B cell (primary cell): ENCODE measurements at regions of chr7 and their contacts with region 1.

Region 1: DNA sequence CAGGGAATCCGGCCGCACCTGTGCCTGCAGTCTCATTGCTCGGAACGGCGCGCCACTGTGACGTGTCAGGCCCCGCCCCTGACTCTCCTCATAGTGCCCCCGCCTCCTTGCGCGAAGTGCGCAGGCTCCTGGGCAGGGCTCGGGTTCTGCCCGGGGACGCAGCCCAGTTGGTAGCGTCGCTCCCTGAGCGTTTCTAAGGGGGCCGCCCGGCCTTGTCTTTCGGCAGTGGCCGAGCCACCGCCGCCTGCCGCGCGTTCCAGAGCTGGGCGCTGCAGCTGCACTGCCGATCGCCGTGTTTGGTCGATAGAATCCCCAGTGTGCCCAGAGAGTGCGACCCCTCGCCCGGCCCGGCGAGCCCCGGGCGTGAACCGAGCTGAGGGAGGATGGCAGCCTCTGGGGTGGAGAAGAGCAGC is at the start of gene KLHL7:
- DNase-seq: peak; percentile 96
- ATAC-seq: peak; percentile 96
- H3K4me3 ChIP-seq: peak within 1 kb of the TSS; percentile 86 to 99 (median 94)
- H3K4me3 Mint-ChIP-seq: peak within 1 kb of the TSS; percentile 99
- H3K27ac ChIP-seq: peak within 1 kb of the TSS; percentile 88 to 95
- H3K27ac Mint-ChIP-seq: peak within 1 kb of the TSS; percentile 97
- H3K4me1 ChIP-seq: peaks cover 15 to 16% of the 10 kb centered on the region in 2 donors
- H3K4me1 Mint-ChIP-seq: peaks cover 32% of the 10 kb centered on the region
- H3K27me3 ChIP-seq: no peaks in the 10 kb centered on the region
- H3K27me3 Mint-ChIP-seq: no peaks in the 10 kb centered on the region
- CTCF ChIP-seq: no peak
- total RNA-seq, gene KLHL7: 22.8 and 29.5 TPM in 2 replicates

Region 2: DNA sequence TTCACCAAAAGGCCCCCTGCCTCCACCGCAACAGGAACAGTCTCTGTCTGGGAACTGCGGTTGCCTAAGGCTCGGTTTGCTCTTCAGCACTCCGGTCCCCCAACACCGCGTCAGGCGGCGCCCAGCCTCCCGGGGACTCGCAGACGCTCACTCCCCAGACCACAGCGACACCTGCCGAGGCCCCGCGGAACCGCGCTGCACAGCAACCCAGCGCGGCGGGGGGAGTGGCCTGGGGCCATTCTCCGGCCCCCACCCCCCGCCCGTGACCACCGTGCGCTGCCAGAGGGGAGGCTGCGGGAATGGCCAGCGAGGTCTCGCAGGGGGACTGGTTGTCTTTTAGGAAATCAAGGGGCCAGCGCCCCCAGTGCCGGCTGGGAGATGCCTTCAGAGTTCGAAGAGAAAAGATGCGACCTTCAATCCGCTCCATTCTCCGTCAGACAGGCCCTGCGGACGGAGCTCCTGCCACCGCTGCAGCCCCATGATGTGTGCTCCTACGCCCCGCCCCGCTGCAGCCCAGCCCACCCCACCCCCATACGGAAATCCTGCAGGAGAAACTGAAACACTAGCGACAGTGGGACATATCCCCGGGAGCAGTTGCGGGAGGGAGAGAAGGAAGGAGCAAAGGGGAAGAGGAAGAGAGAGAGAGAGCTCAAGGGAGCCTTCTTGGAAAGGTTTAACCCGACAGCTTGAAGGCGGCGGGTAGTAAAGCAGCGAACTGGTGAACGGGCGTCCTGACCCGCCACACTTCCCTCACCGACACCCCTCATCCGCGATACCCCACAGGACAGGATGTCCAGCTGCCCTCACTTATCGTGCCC is 1022.6 kb before region 1 on chr7:
- CTCF ChIA-PET with region 1: no interaction called
- POLR2A ChIA-PET with region 1: no interaction called
- intact Hi-C with region 1: loop called (anchors 5 kb)
- DNase-seq: peak; percentile 92
- ATAC-seq: peak; percentile 97
- H3K4me3 ChIP-seq: peak overlapping the region; percentile 58 to 80 (median 72)
- H3K4me3 Mint-ChIP-seq: peak overlapping the region; percentile 94
- H3K27ac ChIP-seq: peak overlapping the region; percentile 63 to 68
- H3K27ac Mint-ChIP-seq: peak overlapping the region; percentile 90
- H3K4me1 ChIP-seq: peaks cover 8 to 14% of the 10 kb centered on the region in 2 donors
- H3K4me1 Mint-ChIP-seq: peaks cover 18% of the 10 kb centered on the region
- H3K27me3 ChIP-seq: peaks cover 0 to 11% (median 7%) of the 10 kb centered on the region in 4 experiments
- H3K27me3 Mint-ChIP-seq: peaks cover 25% of the 10 kb centered on the region
- CTCF ChIP-seq: peak; percentile 98

Region 3: DNA sequence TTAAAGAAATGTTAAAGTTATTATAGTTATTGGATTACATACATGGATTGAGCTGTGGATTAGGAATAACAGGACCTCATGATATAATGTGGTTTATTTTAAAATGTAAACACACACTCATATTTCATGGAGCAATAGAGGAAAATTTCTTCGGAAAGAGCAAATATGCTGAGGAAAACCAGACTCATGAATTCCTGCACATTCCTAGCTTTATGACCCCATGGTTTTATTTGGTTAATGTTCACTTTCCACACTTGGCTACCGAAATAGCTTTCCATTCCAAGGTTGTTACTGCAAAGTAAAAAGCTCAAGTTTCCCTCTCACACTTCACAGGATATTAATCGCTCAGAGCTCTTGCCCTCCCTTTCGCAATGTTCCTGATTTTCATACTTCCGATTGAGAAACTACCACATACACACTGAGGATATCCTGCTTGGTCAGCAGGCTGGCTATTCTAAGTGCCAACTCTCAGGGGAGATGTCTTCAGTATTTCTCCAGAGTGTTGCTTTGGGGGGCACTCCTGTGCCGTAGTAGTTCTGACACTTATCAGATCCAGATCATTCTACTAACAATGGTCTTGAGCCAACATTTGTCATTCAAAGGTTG is 528.2 kb before region 1 on chr7:
- CTCF ChIA-PET with region 1: no interaction called
- POLR2A ChIA-PET with region 1: no interaction called
- intact Hi-C with region 1: no loop called
- DNase-seq: no peak
- ATAC-seq: peak; percentile 33
- H3K4me3 ChIP-seq: no peak overlapping the region
- H3K4me3 Mint-ChIP-seq: peak overlapping the region; percentile 66
- H3K27ac ChIP-seq: no peak overlapping the region
- H3K27ac Mint-ChIP-seq: peak overlapping the region; percentile 51
- H3K4me1 ChIP-seq: peaks cover 16% of the 10 kb centered on the region in 2 donors
- H3K4me1 Mint-ChIP-seq: peaks cover 29% of the 10 kb centered on the region
- H3K27me3 ChIP-seq: no peaks in the 10 kb centered on the region
- H3K27me3 Mint-ChIP-seq: no peaks in the 10 kb centered on the region
- CTCF ChIP-seq: no peak

Region 4: GRCh38 chr7:22822486-22823141 is 283.0 kb before region 1 on chr7 and contains the start of gene TOMM7:
- CTCF ChIA-PET with region 1: interaction called, 4 read pairs
- POLR2A ChIA-PET with region 1: no interaction called
- intact Hi-C with region 1: loop called (anchors 1 kb)
- DNase-seq: peak; percentile 97
- ATAC-seq: peak; percentile 98
- H3K4me3 ChIP-seq: peak within 1 kb of the TSS; percentile 82 to 97 (median 94)
- H3K4me3 Mint-ChIP-seq: peak within 1 kb of the TSS; percentile 98
- H3K27ac ChIP-seq: peak within 1 kb of the TSS; percentile 79 to 81
- H3K27ac Mint-ChIP-seq: peak within 1 kb of the TSS; percentile 97
- H3K4me1 ChIP-seq: peaks cover 12 to 21% of the 10 kb centered on the region in 2 donors
- H3K4me1 Mint-ChIP-seq: peaks cover 32% of the 10 kb centered on the region
- H3K27me3 ChIP-seq: no peaks in the 10 kb centered on the region
- H3K27me3 Mint-ChIP-seq: peaks cover 10% of the 10 kb centered on the region
- CTCF ChIP-seq: no peak
- total RNA-seq, gene TOMM7: 400 and 437 TPM in 2 replicates

Region 5: DNA sequence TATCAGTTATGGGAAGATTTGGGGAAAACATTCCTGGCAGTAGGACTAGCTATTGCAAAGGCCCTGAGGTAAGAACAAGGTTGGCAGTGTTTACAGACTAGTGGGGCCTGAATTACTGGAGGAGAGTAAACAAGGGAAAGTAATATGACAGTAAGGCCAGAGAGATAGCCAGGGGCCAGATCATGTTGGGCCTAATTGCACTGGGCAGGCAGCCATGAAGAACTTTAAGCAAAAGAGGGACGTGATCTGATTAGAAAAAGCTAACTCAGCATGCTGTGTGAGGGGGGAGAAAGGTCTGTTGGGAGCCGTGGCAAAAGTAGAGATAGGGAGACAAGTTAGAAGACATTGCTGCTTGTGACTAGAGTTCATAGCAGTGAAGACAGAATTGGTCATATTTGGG is 85.4 kb after region 1 on chr7:
- CTCF ChIA-PET with region 1: no interaction called
- POLR2A ChIA-PET with region 1: no interaction called
- intact Hi-C with region 1: no loop called
- DNase-seq: no peak
- ATAC-seq: no peak
- H3K4me3 ChIP-seq: no peak overlapping the region
- H3K4me3 Mint-ChIP-seq: no peak overlapping the region
- H3K27ac ChIP-seq: no peak overlapping the region
- H3K27ac Mint-ChIP-seq: no peak overlapping the region
- H3K4me1 ChIP-seq: no peaks in the 10 kb centered on the region
- H3K4me1 Mint-ChIP-seq: peaks cover 3% of the 10 kb centered on the region
- H3K27me3 ChIP-seq: no peaks in the 10 kb centered on the region
- H3K27me3 Mint-ChIP-seq: no peaks in the 10 kb centered on the region
- CTCF ChIP-seq: no peak

Region 6: GRCh38 chr7:23679898-23680413 is 574.3 kb after region 1 on chr7 and contains the start of gene FAM221A:
- CTCF ChIA-PET with region 1: no interaction called
- POLR2A ChIA-PET with region 1: no interaction called
- intact Hi-C with region 1: loop called (anchors 5 kb)
- DNase-seq: peak; percentile 89
- ATAC-seq: peak; percentile 99
- H3K4me3 ChIP-seq: peak within 1 kb of the TSS; percentile 51 to 85 (median 75)
- H3K4me3 Mint-ChIP-seq: peak within 1 kb of the TSS; percentile 90
- H3K27ac ChIP-seq: peak within 1 kb of the TSS in 1 of 2 donors; percentile 57
- H3K27ac Mint-ChIP-seq: peak within 1 kb of the TSS; percentile 81
- H3K4me1 ChIP-seq: peaks cover 0 to 15% of the 10 kb centered on the region in 2 donors
- H3K4me1 Mint-ChIP-seq: peaks cover 9% of the 10 kb centered on the region
- H3K27me3 ChIP-seq: no peaks in the 10 kb centered on the region
- H3K27me3 Mint-ChIP-seq: no peaks in the 10 kb centered on the region
- CTCF ChIP-seq: peak; percentile 80
- total RNA-seq, gene FAM221A: 10.7 and 10.8 TPM in 2 replicates